WTC11 (cell line): ENCODE measurements at regions of chr16 and their contacts with region 1.

Region 1: GRCh38 chr16:85187002-85187401 is 74.7 kb upstream of the CIBAR2 start:
- DNase-seq: no peak
- ATAC-seq: peak; percentile 55
- H3K4me3 Mint-ChIP-seq: no peak overlapping the region
- H3K27ac Mint-ChIP-seq: peak overlapping the region; percentile 78; the same call in 1 of the 2 replicates
- H3K4me1 Mint-ChIP-seq: 0 out of 2 replicates have a peak, but pooled peaks cover 9% of the 10 kb centered on the region
- H3K27me3 Mint-ChIP-seq: peaks cover 2% of the 10 kb centered on the region; the same call in 1 of the 2 replicates
- CTCF ChIP-seq: no peak

Region 2: GRCh38 chr16:85172455-85173145 is 14.4 kb before region 1 on chr16:
- CTCF ChIA-PET with region 1: interaction called, 16 read pairs
- POLR2A ChIA-PET with region 1: no interaction called
- DNase-seq: peak; percentile 60
- ATAC-seq: peak; percentile 21
- H3K4me3 Mint-ChIP-seq: peak overlapping the region; percentile 38
- H3K27ac Mint-ChIP-seq: no peak overlapping the region
- H3K4me1 Mint-ChIP-seq: peaks cover 60% of the 10 kb centered on the region
- H3K27me3 Mint-ChIP-seq: peaks cover 22% of the 10 kb centered on the region
- CTCF ChIP-seq: no peak

Region 3: GRCh38 chr16:85202631-85203461 is 15.8 kb after region 1 on chr16:
- CTCF ChIA-PET with region 1: interaction called, 11 read pairs
- POLR2A ChIA-PET with region 1: no interaction called
- DNase-seq: peak; percentile 57
- ATAC-seq: peak; percentile 71
- H3K4me3 Mint-ChIP-seq: no peak overlapping the region
- H3K27ac Mint-ChIP-seq: peak overlapping the region; percentile 12
- H3K4me1 Mint-ChIP-seq: peaks cover 36% of the 10 kb centered on the region
- H3K27me3 Mint-ChIP-seq: no peaks in the 10 kb centered on the region; the same call in 1 of the 2 replicates
- CTCF ChIP-seq: no peak

Region 4: DNA sequence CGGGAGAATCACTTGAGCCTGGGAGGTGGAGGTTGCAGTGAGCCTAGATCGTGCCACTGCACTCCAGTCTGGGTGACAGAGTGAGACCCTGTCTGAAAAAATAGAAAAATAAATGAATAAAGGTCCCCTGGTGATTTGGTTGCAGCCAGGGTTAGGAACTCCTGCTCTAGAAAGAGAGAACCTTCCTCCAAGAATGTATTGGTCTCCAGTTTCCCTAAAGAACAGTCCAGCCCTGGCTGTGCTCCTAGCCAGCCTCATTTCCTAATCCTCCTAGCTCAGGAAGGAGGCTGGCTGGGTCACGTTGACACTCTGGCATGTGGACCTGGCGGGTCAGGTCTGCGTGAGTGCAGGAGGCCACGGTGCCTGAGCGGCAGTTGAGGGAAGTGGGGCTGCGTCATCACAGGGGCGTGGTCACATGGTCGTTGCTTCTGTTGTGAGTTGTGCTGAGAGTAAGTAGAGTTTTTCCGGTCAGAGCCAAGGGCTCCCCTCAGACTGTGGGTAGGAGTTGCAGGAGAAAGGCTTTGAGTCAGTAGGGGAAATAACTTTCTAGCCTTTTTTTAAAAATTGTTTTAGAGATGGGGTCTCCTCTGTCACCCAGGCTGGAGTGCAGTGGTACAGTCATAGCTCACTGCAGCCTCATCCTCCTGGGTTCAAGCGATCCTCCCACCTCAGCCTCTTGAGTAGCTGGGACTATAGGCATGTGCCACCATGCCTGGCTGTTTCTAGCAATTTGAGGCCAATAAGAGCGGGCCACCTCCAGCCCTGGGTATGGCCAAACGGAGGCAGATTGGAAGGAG is 119.2 kb after region 1 on chr16:
- CTCF ChIA-PET with region 1: no interaction called
- POLR2A ChIA-PET with region 1: no interaction called
- DNase-seq: no peak
- ATAC-seq: no peak
- H3K4me3 Mint-ChIP-seq: no peak overlapping the region
- H3K27ac Mint-ChIP-seq: peak overlapping the region; percentile 74
- H3K4me1 Mint-ChIP-seq: peaks cover 61% of the 10 kb centered on the region
- H3K27me3 Mint-ChIP-seq: no peaks in the 10 kb centered on the region; the same call in 1 of the 2 replicates
- CTCF ChIP-seq: no peak